Naive thymus-derived CD4-positive, alpha-beta T cell (primary cell): ENCODE measurements at regions of chr2 and their contacts with region 1.

Region 1: DNA sequence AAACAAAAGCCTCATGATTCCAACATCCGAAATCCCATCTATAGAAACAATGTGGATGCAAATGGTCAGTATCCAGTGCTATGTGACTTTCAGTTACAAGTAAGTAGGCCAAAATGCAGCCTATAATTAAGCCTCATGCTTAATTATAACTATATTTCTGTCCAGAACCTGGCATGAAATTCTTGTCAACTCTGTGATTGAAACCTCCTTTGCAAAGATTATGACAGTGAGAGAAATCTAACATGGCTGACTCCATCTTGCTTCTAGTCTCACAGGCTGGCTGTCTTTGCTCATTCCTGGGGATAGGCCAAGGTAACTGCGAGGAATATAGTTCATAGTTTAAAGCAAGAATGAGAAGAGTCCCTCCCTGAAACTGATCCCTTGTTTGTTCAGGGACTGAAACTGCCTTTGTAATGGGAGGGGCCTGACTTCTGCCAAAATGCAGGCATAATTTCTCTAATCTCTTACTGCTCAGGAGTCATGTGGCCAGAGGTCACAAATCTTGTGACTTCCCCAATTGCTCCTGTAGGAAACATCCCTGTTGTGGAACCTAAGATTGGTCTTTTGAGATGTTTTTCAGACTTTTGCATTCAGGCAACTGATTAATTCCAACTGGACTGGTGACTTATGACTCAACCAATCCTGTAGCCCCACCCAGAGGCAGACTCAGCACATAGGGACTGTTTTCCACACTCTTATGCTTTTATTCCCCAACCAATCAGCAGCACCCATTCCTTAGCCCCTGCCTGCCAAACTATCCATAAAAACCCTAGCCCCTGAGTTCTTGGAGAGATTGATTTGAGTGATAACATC is 84.5 kb upstream of the TLK1 start:
- DNase-seq: no peak
- ATAC-seq: no peak
- H3K4me3 ChIP-seq: no peak overlapping the region
- H3K4me3 Mint-ChIP-seq: no peak overlapping the region
- H3K27ac ChIP-seq: no peak overlapping the region
- H3K27ac Mint-ChIP-seq: peak overlapping the region in 1 of 9 donors; percentile 38
- H3K4me1 ChIP-seq: peaks cover 19 to 24% of the 10 kb centered on the region in 2 donors
- H3K4me1 Mint-ChIP-seq: peaks cover 19 to 49% (median 46%) of the 10 kb centered on the region in 7 donors
- H3K27me3 ChIP-seq: no peaks in the 10 kb centered on the region
- H3K27me3 Mint-ChIP-seq: peaks cover 0 to 4% (median 0%) of the 10 kb centered on the region in 5 donors

Region 2: DNA sequence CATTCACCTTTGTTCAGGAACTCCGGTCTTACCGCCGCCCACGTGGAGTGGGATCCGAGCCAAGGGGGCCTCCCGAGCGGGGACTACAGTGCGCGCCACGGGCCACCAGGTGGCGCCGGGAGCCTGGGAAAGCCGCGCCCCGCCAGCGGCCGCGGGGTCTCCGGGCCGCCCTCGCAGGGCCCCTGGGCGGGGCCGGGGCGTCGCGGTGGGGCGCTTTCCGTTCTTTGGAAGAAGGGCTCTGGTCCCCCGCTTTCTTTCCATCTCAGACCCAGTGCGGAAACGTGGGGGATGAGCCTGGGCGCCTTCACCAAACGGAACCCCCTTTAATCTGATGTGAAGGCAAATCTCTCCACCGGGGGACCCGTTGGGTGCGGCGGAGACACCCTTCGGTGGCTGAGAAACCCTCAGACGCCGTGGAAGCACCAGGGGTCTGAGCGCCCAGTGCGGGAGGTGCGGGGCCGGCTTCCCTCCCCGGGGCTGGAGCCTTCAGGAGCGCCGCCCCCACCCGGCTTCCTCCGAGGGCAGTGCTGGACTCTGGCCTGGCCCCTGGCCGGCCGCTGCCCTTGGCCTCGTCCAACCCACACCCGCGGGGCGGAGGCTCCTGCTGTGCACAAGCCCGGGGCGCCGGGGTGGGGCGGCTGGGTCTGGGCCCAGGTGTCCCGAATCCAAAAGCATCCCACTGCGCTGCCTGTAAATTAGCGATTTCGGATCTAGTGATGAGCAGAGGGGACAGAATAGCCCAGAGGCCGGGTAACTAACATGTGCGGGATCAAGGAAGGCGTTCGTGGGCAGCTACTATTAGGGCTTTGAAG is 271.5 kb before region 1 on chr2:
- CTCF ChIA-PET with region 1: no interaction called
- POLR2A ChIA-PET with region 1: no interaction called
- intact Hi-C with region 1: loop called (anchors 1 to 5 kb)
- DNase-seq: peak; percentile 86 to 96 (median 91)
- ATAC-seq: peak; percentile 99
- H3K4me3 ChIP-seq: peak overlapping the region; percentile 84
- H3K4me3 Mint-ChIP-seq: peak overlapping the region; percentile 51 to 87 (median 84)
- H3K27ac ChIP-seq: peak overlapping the region; percentile 67
- H3K27ac Mint-ChIP-seq: peak overlapping the region; percentile 33 to 90 (median 79)
- H3K4me1 ChIP-seq: peaks cover 4 to 11% of the 10 kb centered on the region in 2 donors
- H3K4me1 Mint-ChIP-seq: peaks cover 5 to 20% (median 10%) of the 10 kb centered on the region in 7 donors
- H3K27me3 ChIP-seq: no peaks in the 10 kb centered on the region
- H3K27me3 Mint-ChIP-seq: no peaks in the 10 kb centered on the region

Region 3: DNA sequence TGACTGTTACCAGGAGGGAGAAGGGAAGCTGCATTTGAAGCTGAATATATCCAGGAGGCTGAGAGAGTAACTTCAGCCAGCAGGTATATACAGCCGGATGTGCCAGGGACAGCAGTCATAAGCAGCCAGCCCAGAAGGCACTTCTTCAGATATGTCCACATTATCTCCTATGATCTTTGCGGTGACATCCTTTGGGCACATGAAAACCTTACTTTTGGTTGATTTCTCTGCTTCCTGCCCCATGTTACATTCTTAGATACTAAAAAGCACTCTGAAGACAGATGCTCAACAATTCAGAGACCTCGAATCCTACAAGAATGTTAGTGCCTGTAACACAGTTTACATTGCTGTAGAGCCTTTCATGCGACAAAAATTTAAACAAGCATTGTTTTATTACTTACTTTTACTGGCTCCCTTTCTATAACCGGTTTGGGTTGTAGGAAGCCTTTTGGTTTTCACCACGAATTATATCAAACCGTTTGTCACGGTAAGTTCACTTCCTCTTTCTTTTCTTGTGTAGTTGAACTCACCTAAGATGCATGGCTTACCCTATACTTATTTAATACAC is 34.2 kb before region 1 on chr2:
- CTCF ChIA-PET with region 1: no interaction called
- POLR2A ChIA-PET with region 1: no interaction called
- intact Hi-C with region 1: loop called (anchors 2 to 5 kb)
- DNase-seq: peak in 7 of 9 donors; percentile 47 to 74 (median 66)
- ATAC-seq: peak; percentile 91
- H3K4me3 ChIP-seq: peak overlapping the region; percentile 38
- H3K4me3 Mint-ChIP-seq: peak overlapping the region; percentile 34 to 83 (median 78)
- H3K27ac ChIP-seq: peak overlapping the region; percentile 63
- H3K27ac Mint-ChIP-seq: peak overlapping the region; percentile 30 to 93 (median 83)
- H3K4me1 ChIP-seq: peaks cover 5 to 9% of the 10 kb centered on the region in 2 donors
- H3K4me1 Mint-ChIP-seq: peaks cover 3 to 28% (median 27%) of the 10 kb centered on the region in 7 donors
- H3K27me3 ChIP-seq: no peaks in the 10 kb centered on the region
- H3K27me3 Mint-ChIP-seq: peaks cover 0 to 3% (median 0%) of the 10 kb centered on the region in 5 donors

Region 4: GRCh38 chr2:171260471-171261424 is 15.6 kb after region 1 on chr2:
- CTCF ChIA-PET with region 1: no interaction called
- POLR2A ChIA-PET with region 1: interaction called, 4 read pairs
- intact Hi-C with region 1: loop called in 1 of 2 experiments (anchors 1 kb)
- DNase-seq: peak in 1 of 9 donors; percentile 31
- ATAC-seq: peak; percentile 41
- H3K4me3 ChIP-seq: no peak overlapping the region
- H3K4me3 Mint-ChIP-seq: peak overlapping the region in 4 of 10 donors; percentile 1 to 36 (median 19)
- H3K27ac ChIP-seq: no peak overlapping the region
- H3K27ac Mint-ChIP-seq: peak overlapping the region in 8 of 9 donors; percentile 3 to 83 (median 37)
- H3K4me1 ChIP-seq: peaks cover 0 to 11% of the 10 kb centered on the region in 2 donors
- H3K4me1 Mint-ChIP-seq: peaks cover 6 to 21% (median 15%) of the 10 kb centered on the region in 7 donors
- H3K27me3 ChIP-seq: no peaks in the 10 kb centered on the region
- H3K27me3 Mint-ChIP-seq: peaks cover 0 to 3% (median 0%) of the 10 kb centered on the region in 5 donors

Region 5: DNA sequence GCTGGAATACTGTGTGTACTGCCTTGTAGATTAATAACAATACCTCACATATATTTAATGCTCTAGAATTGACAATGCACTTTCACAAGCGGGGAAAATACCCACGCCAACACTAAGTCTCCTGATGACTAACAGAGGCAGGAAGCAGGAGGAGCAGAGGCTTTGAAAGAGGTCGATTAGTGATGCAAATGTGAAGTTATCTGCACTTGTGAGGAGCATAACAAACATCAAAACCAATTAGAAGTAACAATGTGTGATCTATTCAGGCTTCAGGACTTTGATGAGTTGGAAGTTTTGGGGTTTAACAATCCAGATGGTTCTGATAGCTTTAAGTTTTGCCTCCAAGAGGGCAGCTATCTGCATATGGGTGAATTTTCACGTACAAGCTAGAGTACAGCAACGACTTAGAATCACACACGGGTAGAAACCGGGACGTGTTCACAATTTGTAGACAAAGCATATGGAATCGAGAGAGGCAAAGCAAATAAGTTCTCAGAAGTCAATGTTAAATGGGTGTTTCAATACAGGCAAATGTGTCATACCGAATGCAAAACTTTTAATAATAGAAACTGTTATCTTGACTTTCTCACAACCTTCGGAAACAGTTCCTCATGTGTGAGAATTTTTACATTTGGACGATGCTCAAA is 74.1 kb after region 1 on chr2:
- CTCF ChIA-PET with region 1: no interaction called
- POLR2A ChIA-PET with region 1: no interaction called
- intact Hi-C with region 1: loop called in 1 of 2 experiments (anchors 5 kb)
- DNase-seq: peak in 8 of 9 donors; percentile 16 to 60 (median 40)
- ATAC-seq: peak; percentile 91
- H3K4me3 ChIP-seq: no peak overlapping the region
- H3K4me3 Mint-ChIP-seq: peak overlapping the region; percentile 38 to 79 (median 69)
- H3K27ac ChIP-seq: no peak overlapping the region
- H3K27ac Mint-ChIP-seq: peak overlapping the region; percentile 19 to 87 (median 63)
- H3K4me1 ChIP-seq: peaks cover 0 to 4% of the 10 kb centered on the region in 2 donors
- H3K4me1 Mint-ChIP-seq: peaks cover 12 to 52% (median 38%) of the 10 kb centered on the region in 7 donors
- H3K27me3 ChIP-seq: no peaks in the 10 kb centered on the region
- H3K27me3 Mint-ChIP-seq: no peaks in the 10 kb centered on the region

Region 6: GRCh38 chr2:171410101-171410500 is 164.9 kb after region 1 on chr2:
- CTCF ChIA-PET with region 1: no interaction called
- POLR2A ChIA-PET with region 1: no interaction called
- intact Hi-C with region 1: loop called in 1 of 2 experiments (anchors 5 kb)
- DNase-seq: no peak
- ATAC-seq: no peak
- H3K4me3 ChIP-seq: no peak overlapping the region
- H3K4me3 Mint-ChIP-seq: no peak overlapping the region
- H3K27ac ChIP-seq: no peak overlapping the region
- H3K27ac Mint-ChIP-seq: no peak overlapping the region
- H3K4me1 ChIP-seq: no peaks in the 10 kb centered on the region
- H3K4me1 Mint-ChIP-seq: peaks cover 0 to 22% (median 9%) of the 10 kb centered on the region in 7 donors
- H3K27me3 ChIP-seq: no peaks in the 10 kb centered on the region
- H3K27me3 Mint-ChIP-seq: no peaks in the 10 kb centered on the region